Activated CD4-positive, alpha-beta T cell treated with anti-CD3 and anti-CD28 coated beads for 36 hours (primary cell): ENCODE measurements at regions of chrX and their contacts with region 1.

Region 1: DNA sequence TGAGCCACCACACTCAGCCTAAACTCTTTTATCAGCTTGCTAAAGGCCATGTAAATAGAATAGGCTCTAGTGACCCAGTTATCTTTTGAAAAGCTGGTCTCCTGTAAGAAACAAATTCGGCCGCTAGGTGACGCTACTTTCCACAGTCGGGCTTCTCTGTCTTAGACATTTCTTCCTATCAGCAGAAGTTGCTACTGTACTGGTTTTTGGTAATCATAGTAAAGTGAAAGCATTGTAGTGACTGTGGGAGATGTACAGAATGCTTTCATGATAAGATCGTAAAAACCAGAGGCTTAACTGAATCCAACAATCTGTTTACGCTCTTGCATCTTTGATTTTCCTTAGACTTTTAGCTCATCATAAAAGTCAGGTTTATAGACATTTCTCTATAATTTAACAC is 82.6 kb downstream of the GK start:
- DNase-seq: peak; percentile 86
- ATAC-seq: peak; percentile 83
- H3K4me3 Mint-ChIP-seq: no peak overlapping the region
- H3K27ac Mint-ChIP-seq: no peak overlapping the region
- H3K4me1 Mint-ChIP-seq: peaks cover 17% of the 10 kb centered on the region
- H3K27me3 Mint-ChIP-seq: no peaks in the 10 kb centered on the region

Region 2: DNA sequence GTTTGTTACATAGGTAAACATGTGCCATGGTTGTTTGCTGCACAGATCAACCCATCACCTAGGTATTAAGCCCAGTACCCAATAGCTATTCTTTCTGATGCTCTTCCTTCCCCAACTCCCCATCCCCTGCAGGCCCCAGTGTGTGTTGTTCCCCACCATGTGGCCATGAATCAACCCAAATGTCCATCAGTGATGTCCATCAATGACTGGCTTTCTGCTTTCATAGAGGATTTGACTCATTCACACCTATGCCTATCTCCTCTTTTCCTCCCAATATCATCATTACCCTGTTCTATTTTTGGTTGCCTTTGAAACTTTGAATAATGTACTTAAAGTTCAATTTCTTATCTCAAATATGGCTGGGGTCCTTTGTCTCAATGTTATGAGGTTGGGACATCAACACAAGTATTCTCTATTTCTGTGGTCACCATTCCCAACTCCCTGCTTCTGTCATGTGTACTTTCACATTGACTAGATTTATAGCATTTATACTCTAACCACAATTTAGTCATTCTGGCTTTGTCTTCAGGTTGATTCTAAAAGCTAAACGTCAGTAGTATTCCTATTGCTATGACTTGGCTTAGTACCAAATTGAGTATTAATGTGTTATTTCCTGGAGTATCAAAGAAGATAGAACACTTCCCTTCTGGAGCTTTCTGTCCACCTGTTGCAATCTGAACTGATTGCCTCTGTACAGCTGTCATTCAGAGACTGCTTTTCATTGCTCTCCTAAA is 46.0 kb after region 1 on chrX:
- CTCF ChIA-PET with region 1: interaction called, 4 read pairs
- POLR2A ChIA-PET with region 1: no interaction called
- intact Hi-C with region 1: loop called in 1 of 2 experiments (anchors 5 kb)
- DNase-seq: no peak
- ATAC-seq: peak; percentile 81
- H3K4me3 Mint-ChIP-seq: no peak overlapping the region
- H3K27ac Mint-ChIP-seq: peak overlapping the region; percentile 37
- H3K4me1 Mint-ChIP-seq: peaks cover 29% of the 10 kb centered on the region
- H3K27me3 Mint-ChIP-seq: peaks cover 13% of the 10 kb centered on the region

Region 3: GRCh38 chrX:30831082-30831481 is 95.2 kb after region 1 on chrX:
- CTCF ChIA-PET with region 1: interaction called, 7 read pairs
- POLR2A ChIA-PET with region 1: interaction called, 4 read pairs
- intact Hi-C with region 1: loop called in 1 of 2 experiments (anchors 5 kb)
- DNase-seq: peak; percentile 55
- ATAC-seq: peak; percentile 91
- H3K4me3 Mint-ChIP-seq: peak overlapping the region; percentile 34
- H3K27ac Mint-ChIP-seq: no peak overlapping the region
- H3K4me1 Mint-ChIP-seq: peaks cover 37% of the 10 kb centered on the region
- H3K27me3 Mint-ChIP-seq: no peaks in the 10 kb centered on the region

Region 4: GRCh38 chrX:30971774-30972603 is 236.2 kb after region 1 on chrX:
- CTCF ChIA-PET with region 1: no interaction called
- POLR2A ChIA-PET with region 1: no interaction called
- intact Hi-C with region 1: loop called in 1 of 2 experiments (anchors 10 kb)
- DNase-seq: peak; percentile 41
- ATAC-seq: peak; percentile 86
- H3K4me3 Mint-ChIP-seq: peak overlapping the region; percentile 57
- H3K27ac Mint-ChIP-seq: no peak overlapping the region
- H3K4me1 Mint-ChIP-seq: peaks cover 14% of the 10 kb centered on the region
- H3K27me3 Mint-ChIP-seq: peaks cover 4% of the 10 kb centered on the region

Region 5: GRCh38 chrX:31658360-31658759 is 922.5 kb after region 1 on chrX:
- CTCF ChIA-PET with region 1: interaction called, 5 read pairs
- POLR2A ChIA-PET with region 1: no interaction called
- intact Hi-C with region 1: loop called in 1 of 2 experiments (anchors 5 kb)
- DNase-seq: no peak
- ATAC-seq: no peak
- H3K4me3 Mint-ChIP-seq: no peak overlapping the region
- H3K27ac Mint-ChIP-seq: no peak overlapping the region
- H3K4me1 Mint-ChIP-seq: no peaks in the 10 kb centered on the region
- H3K27me3 Mint-ChIP-seq: no peaks in the 10 kb centered on the region